ENCODE measurements at regions of chr2 and their contacts with region 1.

Region 1: DNA sequence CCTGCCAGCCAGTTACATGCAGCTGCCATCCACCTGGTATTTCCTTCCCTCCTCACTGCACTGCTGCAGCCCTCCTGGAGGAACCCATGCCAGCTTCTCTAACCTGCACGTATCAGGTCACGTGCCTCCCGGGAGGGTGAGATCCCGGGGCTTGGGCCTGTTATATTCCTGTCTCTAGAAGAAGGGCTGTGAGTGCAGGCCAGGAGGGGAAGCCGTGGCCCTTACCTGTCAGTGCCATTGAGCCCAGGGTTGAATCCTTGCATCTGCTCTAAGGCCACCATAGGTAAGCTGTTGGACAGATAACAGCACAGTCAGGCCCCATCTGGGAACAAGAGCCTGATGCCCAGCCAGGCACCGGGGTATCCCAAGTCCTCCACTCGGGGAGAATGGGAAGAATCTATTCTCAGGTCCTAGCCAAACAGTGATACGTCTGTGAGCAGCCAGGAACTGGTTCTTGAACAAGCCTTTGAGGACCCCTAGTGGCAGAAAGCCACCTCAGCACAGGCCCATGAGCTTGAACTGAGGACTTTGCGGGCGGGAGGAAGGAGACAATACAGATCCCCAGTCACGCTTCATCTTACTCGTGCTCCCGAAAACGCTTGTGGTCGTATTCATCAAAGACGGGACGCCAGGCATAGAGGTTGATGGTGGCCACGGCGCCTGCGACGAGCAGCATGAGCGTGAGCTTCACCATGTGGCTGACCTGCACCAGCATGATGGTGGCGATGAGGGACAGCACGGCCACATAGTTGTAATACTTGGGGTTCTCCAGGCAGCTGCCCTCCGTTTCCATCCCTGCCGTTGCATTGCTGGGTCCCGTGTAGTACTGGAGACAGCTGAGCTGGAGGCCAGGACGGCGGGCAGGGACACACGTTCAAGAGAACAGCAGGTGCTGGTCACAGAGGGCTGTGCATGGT is 34.4 kb downstream of the CENPO start:
- DNase-seq: peak; percentile 87
- H3K4me3 ChIP-seq: no peak overlapping the region
- H3K27ac ChIP-seq: peak overlapping the region; percentile 14
- H3K4me1 ChIP-seq: peaks cover 20% of the 10 kb centered on the region
- CTCF ChIP-seq: peak; percentile 91

Region 2: GRCh38 chr2:24613154-24613814 is 214.3 kb before region 1 on chr2:
- CTCF ChIA-PET with region 1: interaction called, 4 read pairs
- POLR2A ChIA-PET with region 1: interaction called, 7 read pairs
- intact Hi-C with region 1: loop called (anchors 1 kb)
- DNase-seq: peak; percentile 72
- H3K4me3 ChIP-seq: no peak overlapping the region
- H3K27ac ChIP-seq: no peak overlapping the region
- H3K4me1 ChIP-seq: no peaks in the 10 kb centered on the region
- CTCF ChIP-seq: peak; percentile 80

Region 3: DNA sequence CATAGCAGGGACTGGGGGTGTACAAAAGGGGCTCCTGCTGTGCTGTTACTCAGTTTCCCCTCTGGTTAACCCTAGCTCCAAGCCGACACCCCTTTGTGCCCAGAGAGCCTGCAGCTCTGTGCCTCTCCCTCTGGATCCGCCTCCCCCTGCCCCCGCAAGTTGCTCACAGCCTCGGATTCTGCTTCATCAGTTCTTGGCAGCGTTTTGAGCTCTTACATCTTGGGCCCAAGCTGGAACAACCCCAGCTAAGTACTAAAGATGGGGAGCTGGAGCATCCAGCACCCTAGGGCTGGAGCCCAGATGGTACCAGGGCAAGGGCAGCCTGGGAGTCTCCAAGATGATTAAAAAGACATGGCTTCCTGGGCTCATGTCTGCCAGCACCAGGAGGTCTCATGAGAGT is 300.1 kb after region 1 on chr2:
- CTCF ChIA-PET with region 1: interaction called, 3 read pairs
- POLR2A ChIA-PET with region 1: no interaction called
- intact Hi-C with region 1: loop called (anchors 5 kb)
- DNase-seq: no peak
- H3K4me3 ChIP-seq: no peak overlapping the region
- H3K27ac ChIP-seq: no peak overlapping the region
- H3K4me1 ChIP-seq: peaks cover 3% of the 10 kb centered on the region
- CTCF ChIP-seq: no peak

Region 4: GRCh38 chr2:25215948-25216679 is 388.5 kb after region 1 on chr2:
- CTCF ChIA-PET with region 1: no interaction called
- POLR2A ChIA-PET with region 1: no interaction called
- intact Hi-C with region 1: no loop called
- DNase-seq: peak; percentile 41
- H3K4me3 ChIP-seq: peak overlapping the region; percentile 44
- H3K27ac ChIP-seq: no peak overlapping the region
- H3K4me1 ChIP-seq: peaks cover under 1% of the 10 kb centered on the region
- CTCF ChIP-seq: no peak

Measured in OCI-LY7 (cell line).